K562 (cell line): ENCODE measurements at regions of chr2 and their contacts with region 1.

Region 1: DNA sequence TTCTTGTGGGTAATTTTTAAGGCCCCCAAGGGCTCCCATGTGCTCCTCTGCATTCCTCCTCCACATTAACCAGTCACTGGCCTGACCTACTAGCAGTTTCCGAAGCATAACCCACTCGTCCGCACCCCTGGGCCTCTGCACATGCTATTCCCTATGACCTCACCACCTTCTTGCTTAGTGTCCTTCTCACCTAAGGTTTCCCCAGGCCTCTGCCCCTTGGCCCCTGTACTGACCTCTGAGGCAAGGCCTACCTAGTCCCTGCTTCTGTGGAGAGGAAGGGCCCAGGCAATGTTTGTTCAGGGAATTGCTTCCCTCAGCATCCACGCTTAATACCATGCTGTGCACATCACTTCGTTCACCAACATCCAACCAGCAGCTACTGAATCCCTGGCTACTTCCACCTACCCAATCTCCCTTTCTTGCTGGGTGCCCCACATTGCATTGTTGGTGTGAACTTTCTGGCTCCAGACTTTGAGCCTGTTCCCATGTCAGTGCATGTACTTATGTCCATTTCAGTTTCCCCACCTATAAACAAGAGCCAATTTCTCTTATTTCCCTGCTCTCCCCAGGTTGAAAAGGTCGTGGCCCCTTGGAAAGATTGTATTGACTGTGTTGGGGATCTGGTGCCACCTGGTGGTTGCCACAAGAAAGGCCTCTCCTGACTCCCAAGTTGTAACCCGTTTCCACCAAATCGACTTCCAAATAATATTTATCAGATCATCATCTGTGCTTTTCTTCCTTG is 19.2 kb upstream of the TMEM177 start:
- DNase-seq: peak in 3 of 4 experiments; percentile 59 to 61 (median 61)
- ATAC-seq: peak; percentile 81
- H3K4me3 ChIP-seq: no peak overlapping the region
- H3K27ac ChIP-seq: no peak overlapping the region
- H3K4me1 ChIP-seq: no peaks in the 10 kb centered on the region
- H3K27me3 ChIP-seq: peaks cover 12 to 30% of the 10 kb centered on the region in 2 experiments; a peak in 3 of 5 replicates
- CTCF ChIP-seq: peak; percentile 80 to 88 (median 87)
- EP300 ChIP-seq: no peak
- POLR2A ChIP-seq: no peak
- RAD21 ChIP-seq: peak; percentile 81 to 85

Region 2: DNA sequence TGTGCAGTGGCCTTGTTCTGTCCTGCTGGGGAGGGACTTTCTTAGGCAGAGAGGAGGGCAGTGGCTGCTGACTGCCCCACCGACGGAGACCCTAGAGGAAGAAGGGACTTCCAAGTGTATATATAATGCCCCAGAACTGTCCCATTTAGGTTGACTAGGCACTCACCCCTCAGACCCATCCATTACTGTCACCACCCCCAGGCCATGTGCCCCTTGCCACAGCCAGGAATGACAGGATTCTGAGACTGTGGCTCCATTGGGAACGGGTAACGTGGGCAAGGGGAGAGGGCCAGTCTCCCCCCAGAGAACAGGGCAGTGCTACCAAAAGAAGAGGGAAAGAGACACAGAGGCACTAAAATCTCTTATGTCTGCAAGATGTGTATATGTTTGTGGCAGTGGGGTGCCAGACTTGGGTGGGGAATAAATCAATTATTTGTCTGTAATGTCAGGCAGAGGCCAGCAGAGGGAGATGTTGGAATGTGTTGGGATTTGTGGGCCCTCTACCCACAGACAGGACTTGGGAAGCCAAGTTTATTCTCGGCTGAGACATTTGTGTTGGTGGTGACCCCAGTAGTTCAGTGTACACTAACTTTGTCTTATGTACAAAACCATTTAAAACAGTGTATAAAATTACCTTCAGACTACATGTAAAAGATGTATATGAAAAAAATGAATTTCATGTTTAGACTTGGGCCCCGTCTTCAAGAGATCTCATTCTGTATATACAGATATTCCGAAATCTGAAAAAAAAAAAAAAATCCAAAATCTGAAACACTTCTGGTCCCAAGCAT is 252.1 kb before region 1 on chr2:
- CTCF ChIA-PET with region 1: interaction called, 18 read pairs
- POLR2A ChIA-PET with region 1: no interaction called
- in situ Hi-C with region 1: loop called (anchors 10 kb)
- intact Hi-C with region 1: loop called (anchors 1 kb)
- DNase-seq: peak; percentile 71 to 78 (median 74)
- ATAC-seq: peak; percentile 89
- H3K4me3 ChIP-seq: no peak overlapping the region
- H3K27ac ChIP-seq: no peak overlapping the region
- H3K4me1 ChIP-seq: no peaks in the 10 kb centered on the region; a peak in 1 of 5 replicates
- H3K27me3 ChIP-seq: peaks cover 0 to 27% of the 10 kb centered on the region in 2 experiments; a peak in 2 of 5 replicates
- CTCF ChIP-seq: peak; percentile 78 to 93 (median 79)
- EP300 ChIP-seq: no peak
- POLR2A ChIP-seq: no peak
- RAD21 ChIP-seq: peak; percentile 95

Region 3: GRCh38 chr2:119494163-119494790 is 165.5 kb before region 1 on chr2:
- CTCF ChIA-PET with region 1: no interaction called
- POLR2A ChIA-PET with region 1: no interaction called
- in situ Hi-C with region 1: no loop called
- intact Hi-C with region 1: no loop called
- DNase-seq: no peak
- ATAC-seq: no peak
- H3K4me3 ChIP-seq: no peak overlapping the region
- H3K27ac ChIP-seq: no peak overlapping the region
- H3K4me1 ChIP-seq: no peaks in the 10 kb centered on the region
- H3K27me3 ChIP-seq: peaks cover 2 to 35% of the 10 kb centered on the region in 2 experiments; a peak in 4 of 5 replicates
- CTCF ChIP-seq: peak in 1 of 3 experiments; percentile 28; a peak in 1 of 6 replicates
- EP300 ChIP-seq: no peak
- POLR2A ChIP-seq: no peak
- RAD21 ChIP-seq: no peak

Region 4: DNA sequence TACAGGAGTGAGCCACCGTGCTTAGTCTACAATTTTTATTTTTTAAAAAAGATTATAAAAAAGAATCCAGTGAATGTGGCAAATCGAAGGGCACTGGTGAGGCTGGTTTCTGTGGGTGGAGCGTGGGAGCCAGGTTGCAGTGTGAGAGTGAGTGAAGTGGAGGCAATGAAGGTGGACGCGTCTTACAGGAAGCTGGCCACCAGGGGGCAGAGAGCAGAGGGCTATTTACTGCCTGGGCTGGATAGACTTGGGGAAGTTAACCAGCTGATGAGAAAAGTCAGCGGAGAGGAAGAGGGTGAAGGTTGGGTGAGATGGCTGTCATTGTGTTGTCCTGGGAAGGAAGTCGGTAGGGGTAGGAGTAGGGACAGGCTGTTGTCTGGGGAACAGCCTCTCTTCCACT is 142.3 kb before region 1 on chr2:
- CTCF ChIA-PET with region 1: interaction called, 22 read pairs
- POLR2A ChIA-PET with region 1: interaction called, 3 read pairs
- in situ Hi-C with region 1: loop called (anchors 5 kb)
- intact Hi-C with region 1: loop called (anchors 1 kb)
- DNase-seq: peak; percentile 75 to 79 (median 76)
- ATAC-seq: peak; percentile 99
- H3K4me3 ChIP-seq: no peak overlapping the region
- H3K27ac ChIP-seq: no peak overlapping the region
- H3K4me1 ChIP-seq: no peaks in the 10 kb centered on the region
- H3K27me3 ChIP-seq: peaks cover 0 to 21% of the 10 kb centered on the region in 2 experiments; a peak in 3 of 5 replicates
- CTCF ChIP-seq: peak; percentile 81 to 82 (median 82)
- EP300 ChIP-seq: no peak
- POLR2A ChIP-seq: no peak
- RAD21 ChIP-seq: peak; percentile 78 to 86

Region 5: DNA sequence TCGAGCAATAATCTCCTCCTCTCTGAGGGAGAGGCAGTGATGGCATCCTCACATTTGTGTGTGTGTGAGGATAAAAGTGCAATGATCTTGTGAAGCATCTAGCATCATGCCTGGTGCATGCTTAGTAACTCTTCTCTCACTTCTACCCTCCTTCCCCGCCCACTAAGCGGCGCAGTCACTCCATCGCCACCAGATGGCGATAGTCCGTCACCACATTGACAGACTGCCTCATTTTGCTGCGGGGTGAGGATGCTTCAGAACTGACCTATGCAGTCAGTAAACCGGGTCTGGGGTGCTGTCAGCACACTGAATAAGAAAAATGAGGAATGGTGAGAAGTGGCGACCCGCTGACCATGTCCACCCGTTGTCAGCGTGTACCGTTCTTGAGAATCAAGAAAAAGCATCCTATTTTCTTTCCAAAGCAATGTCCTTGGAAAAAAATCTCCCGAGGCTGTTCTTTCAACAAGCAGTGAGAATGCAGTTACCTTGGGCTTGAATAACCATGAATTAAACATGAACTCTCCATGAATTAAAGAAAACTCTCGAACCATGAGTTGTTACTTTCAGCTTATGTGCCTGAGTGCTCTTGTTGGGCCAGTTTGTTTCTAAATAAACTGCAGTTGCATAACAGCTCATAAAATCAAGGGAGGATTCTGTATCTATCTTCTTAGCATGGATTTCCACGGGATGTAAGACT is 18.1 kb before region 1 on chr2:
- CTCF ChIA-PET with region 1: interaction called, 4 read pairs
- POLR2A ChIA-PET with region 1: no interaction called
- in situ Hi-C with region 1: no loop called
- intact Hi-C with region 1: loop called (anchors 2 kb)
- DNase-seq: peak; percentile 75 to 83 (median 76)
- ATAC-seq: peak; percentile 99
- H3K4me3 ChIP-seq: no peak overlapping the region
- H3K27ac ChIP-seq: no peak overlapping the region
- H3K4me1 ChIP-seq: peaks cover 0 to 3% of the 10 kb centered on the region in 2 experiments; a peak in 2 of 5 replicates
- H3K27me3 ChIP-seq: peaks cover 26 to 37% of the 10 kb centered on the region in 2 experiments; a peak in 4 of 5 replicates
- CTCF ChIP-seq: peak; percentile 95
- EP300 ChIP-seq: no peak
- POLR2A ChIP-seq: no peak
- RAD21 ChIP-seq: peak; percentile 69 to 83

Region 6: GRCh38 chr2:119704670-119705120 is 44.9 kb after region 1 on chr2:
- CTCF ChIA-PET with region 1: no interaction called
- POLR2A ChIA-PET with region 1: no interaction called
- in situ Hi-C with region 1: no loop called
- intact Hi-C with region 1: no loop called
- DNase-seq: no peak
- ATAC-seq: no peak
- H3K4me3 ChIP-seq: no peak overlapping the region
- H3K27ac ChIP-seq: no peak overlapping the region
- H3K4me1 ChIP-seq: peaks cover 0 to 4% of the 10 kb centered on the region in 2 experiments; a peak in 3 of 5 replicates
- H3K27me3 ChIP-seq: peaks cover 0 to 4% of the 10 kb centered on the region in 2 experiments; a peak in 2 of 5 replicates
- CTCF ChIP-seq: no peak
- EP300 ChIP-seq: no peak
- POLR2A ChIP-seq: no peak
- RAD21 ChIP-seq: no peak